Activated CD4-positive, alpha-beta T cell treated with anti-CD3 and anti-CD28 coated beads, Interleukin-2, amount 10 ng/mL, durations not matched to agents 24 days and 14 days (primary cell): ENCODE measurements at regions of chr2 and their contacts with region 1.

Region 1: DNA sequence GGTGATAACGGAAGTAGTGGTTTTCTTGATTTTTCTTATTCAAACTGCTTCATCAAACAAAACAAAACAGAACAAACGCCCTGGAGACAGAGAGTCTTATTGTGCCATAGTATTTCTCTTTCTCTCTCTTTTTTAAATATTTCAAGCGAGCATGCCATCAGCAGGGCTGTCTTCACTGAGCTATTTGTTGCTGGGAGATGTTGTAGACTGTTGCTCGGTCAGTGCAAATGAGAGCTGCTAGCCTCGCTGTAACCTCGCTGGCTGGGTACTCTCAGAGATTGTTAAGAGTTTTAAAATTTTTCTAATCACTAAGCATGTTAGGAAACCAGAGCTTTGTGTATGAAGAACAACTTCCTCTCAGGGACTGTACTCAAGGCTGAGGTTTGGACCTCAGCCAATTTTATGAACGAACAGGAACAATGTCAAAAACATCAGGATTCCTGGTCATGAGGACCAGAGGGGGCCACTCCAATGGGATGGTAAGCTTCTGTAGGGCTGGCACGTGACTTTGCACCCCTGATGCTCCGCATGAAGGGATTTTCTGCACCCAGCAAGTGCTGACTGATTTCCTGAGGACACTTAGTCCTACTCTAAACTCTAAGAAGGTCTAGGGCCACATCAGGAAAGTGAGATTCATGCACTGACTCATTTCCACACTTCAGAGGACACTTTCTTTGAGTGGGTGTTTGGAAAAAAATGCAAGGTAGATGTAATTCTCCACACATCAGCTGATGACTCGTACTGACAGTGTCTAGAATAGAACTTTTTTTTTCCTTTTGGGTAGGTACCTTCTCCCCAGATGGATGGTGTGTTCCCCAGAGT is 59.8 kb upstream of the IL1R1 start:
- DNase-seq: peak; percentile 81
- H3K4me3 Mint-ChIP-seq: peak overlapping the region; percentile 65
- H3K27ac Mint-ChIP-seq: peak overlapping the region; percentile 90
- H3K4me1 Mint-ChIP-seq: peaks cover 31% of the 10 kb centered on the region
- H3K27me3 Mint-ChIP-seq: peaks cover 10% of the 10 kb centered on the region

Region 2: DNA sequence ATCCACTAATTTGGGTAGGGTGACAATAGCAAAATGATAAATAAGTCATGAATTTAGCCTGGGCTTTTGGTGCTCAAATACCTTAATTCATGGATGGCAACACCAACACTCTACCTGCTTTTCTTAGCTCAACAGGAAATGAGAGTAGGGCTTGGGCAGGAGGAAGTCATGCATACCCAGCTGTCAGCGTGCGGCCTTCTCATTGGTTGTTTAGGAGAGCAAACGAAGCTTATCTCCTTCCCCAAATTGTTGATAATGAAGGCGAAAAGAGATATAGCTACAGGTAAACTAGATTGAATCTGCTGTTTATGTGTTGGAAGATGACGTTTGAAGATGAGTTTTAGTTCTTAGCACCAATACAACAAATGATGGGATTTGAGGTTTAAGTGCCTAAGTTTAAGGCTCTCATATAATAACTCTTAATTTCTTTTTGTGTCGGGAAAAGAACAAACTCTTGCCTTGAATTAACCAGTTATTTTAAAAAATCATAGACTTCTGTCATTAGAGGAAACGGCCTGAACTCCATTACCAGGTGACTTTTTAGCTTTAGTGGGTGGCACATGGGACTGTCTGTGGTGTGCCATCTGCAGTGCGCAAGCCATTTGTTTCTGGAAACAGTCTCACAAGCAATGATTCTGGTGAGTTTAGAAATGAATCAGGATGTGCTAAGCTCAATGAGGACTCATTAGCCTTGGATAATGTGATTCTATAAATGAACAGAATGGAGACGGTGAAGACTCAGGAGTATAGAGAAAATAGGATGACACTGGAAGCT is 365.5 kb before region 1 on chr2:
- intact Hi-C with region 1: loop called (anchors 5 kb)
- DNase-seq: peak; percentile 81
- H3K4me3 Mint-ChIP-seq: peak overlapping the region; percentile 31
- H3K27ac Mint-ChIP-seq: peak overlapping the region; percentile 90
- H3K4me1 Mint-ChIP-seq: peaks cover 58% of the 10 kb centered on the region
- H3K27me3 Mint-ChIP-seq: no peaks in the 10 kb centered on the region

Region 3: GRCh38 chr2:102020596-102021181 is 62.1 kb before region 1 on chr2:
- intact Hi-C with region 1: loop called (anchors 5 kb)
- DNase-seq: peak; percentile 95
- H3K4me3 Mint-ChIP-seq: no peak overlapping the region
- H3K27ac Mint-ChIP-seq: no peak overlapping the region
- H3K4me1 Mint-ChIP-seq: peaks cover 6% of the 10 kb centered on the region
- H3K27me3 Mint-ChIP-seq: peaks cover 8% of the 10 kb centered on the region

Region 4: DNA sequence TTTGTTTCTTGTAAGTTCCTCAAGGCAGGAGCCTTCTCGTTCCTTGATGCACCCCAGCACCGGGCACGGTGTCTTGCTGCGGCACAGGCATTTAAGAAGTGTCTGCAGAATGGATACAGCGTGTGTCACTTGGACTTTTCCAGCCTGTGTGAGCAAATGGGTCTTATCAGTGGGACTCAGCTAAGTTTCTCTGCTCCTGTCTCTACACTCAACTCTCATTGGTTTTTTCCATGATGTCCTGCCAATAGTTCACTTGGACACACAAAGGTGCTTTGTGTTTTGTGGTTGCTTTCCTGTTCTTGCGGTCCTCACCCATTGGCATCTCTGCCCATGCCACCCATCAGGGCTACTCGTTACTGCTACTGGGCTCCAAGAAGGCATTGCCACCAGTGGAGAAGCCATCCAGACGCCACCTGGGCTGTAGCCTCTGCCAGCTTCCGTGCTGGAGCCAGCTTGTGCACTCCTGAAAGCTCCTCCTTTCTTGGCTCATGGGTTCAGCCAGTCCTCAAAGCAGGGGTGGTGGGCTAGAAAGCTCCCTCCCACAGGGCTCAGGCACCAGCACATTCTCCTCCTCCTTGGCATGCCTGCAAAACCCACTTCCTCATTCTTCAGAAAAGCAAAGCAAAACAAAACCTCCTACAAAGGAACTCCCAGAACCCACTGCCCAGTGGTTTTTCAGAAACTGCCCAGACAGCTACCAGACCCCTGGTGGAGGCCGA is 49.6 kb before region 1 on chr2:
- intact Hi-C with region 1: no loop called
- DNase-seq: peak; percentile 78
- H3K4me3 Mint-ChIP-seq: peak overlapping the region; percentile 59
- H3K27ac Mint-ChIP-seq: peak overlapping the region; percentile 80
- H3K4me1 Mint-ChIP-seq: peaks cover 39% of the 10 kb centered on the region
- H3K27me3 Mint-ChIP-seq: peaks cover 6% of the 10 kb centered on the region

Region 5: GRCh38 chr2:102098756-102099155 is 16.0 kb after region 1 on chr2:
- intact Hi-C with region 1: loop called (anchors 1 kb)
- DNase-seq: no peak
- H3K4me3 Mint-ChIP-seq: no peak overlapping the region
- H3K27ac Mint-ChIP-seq: no peak overlapping the region
- H3K4me1 Mint-ChIP-seq: peaks cover 13% of the 10 kb centered on the region
- H3K27me3 Mint-ChIP-seq: peaks cover 26% of the 10 kb centered on the region

Region 6: DNA sequence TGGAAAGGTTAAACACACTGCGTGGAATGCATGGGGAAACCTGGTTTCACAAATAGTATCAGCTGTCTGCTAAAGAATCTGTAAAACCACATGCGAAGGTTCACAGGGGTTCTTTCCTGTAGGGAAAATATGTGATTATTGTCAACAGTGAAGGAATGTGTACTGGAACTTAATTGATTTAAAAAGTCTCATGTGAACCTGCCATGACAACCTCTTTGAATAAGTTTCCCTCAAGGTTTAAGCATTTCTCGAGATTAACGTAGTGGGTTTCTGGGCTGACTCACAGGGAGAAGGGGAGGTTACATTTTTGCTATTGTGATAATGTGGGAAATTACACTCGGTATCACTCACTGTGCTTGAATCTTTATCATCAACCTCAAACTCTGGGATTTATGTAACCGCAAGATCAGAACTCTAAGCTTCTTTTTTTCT is 31.5 kb after region 1 on chr2:
- intact Hi-C with region 1: loop called (anchors 5 kb)
- DNase-seq: no peak
- H3K4me3 Mint-ChIP-seq: no peak overlapping the region
- H3K27ac Mint-ChIP-seq: no peak overlapping the region
- H3K4me1 Mint-ChIP-seq: peaks cover 23% of the 10 kb centered on the region
- H3K27me3 Mint-ChIP-seq: peaks cover 20% of the 10 kb centered on the region

Region 7: GRCh38 chr2:102301867-102302362 is 219.1 kb after region 1 on chr2:
- intact Hi-C with region 1: loop called (anchors 5 kb)
- DNase-seq: peak; percentile 88
- H3K4me3 Mint-ChIP-seq: peak overlapping the region; percentile 67
- H3K27ac Mint-ChIP-seq: peak overlapping the region; percentile 93
- H3K4me1 Mint-ChIP-seq: peaks cover 54% of the 10 kb centered on the region
- H3K27me3 Mint-ChIP-seq: peaks cover 2% of the 10 kb centered on the region

Region 8: GRCh38 chr2:102418421-102418961 is 335.7 kb after region 1 on chr2:
- intact Hi-C with region 1: loop called (anchors 5 kb)
- DNase-seq: peak; percentile 79
- H3K4me3 Mint-ChIP-seq: peak overlapping the region; percentile 86
- H3K27ac Mint-ChIP-seq: peak overlapping the region; percentile 94
- H3K4me1 Mint-ChIP-seq: peaks cover 69% of the 10 kb centered on the region
- H3K27me3 Mint-ChIP-seq: no peaks in the 10 kb centered on the region